Activated CD8-positive, alpha-beta T cell treated with anti-CD3 and anti-CD28 coated beads for 36 hours (primary cell): ENCODE measurements at regions of chr1 and their contacts with region 1.

Region 1: DNA sequence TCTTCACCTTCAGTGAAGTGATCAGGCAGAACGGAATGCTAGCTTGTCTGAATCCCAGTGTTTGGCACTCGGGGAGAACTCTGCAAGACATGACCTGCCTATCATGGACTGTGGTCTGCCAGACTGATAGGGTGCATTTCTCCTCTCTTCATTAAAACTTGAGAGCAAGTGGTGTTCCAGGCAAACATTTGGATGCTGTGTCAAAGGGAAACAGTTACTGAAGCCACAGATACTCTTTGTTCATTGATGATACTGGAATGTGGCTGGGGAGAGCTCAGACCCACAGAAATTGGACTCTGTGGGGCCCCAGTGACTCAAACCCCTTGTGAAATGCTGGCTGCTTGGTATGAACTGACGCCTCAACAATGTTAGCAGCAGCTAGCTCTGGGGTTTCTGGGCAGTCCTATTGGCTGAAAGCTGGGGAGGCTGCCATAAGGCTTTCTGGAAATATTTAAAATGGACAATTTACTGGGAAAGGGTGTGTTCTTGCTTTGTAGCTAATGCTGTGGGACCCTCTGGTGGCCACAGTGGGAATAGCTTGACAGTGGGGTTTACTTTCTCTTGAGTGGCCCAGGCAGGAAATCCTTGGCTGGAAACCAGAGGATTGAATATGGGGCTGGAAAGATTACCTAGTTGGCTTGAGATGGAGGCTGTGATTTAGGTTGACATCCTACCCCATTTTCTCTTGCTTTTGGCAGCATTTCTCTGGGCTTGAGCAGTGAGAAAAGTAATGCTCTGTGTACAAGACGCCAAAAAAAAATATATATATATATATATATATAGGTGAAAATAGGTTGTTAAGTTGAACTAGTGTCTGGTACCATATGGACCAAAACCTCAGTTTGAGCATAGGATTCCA is 8.0 kb upstream of the S100A10 start:
- DNase-seq: peak; percentile 88
- ATAC-seq: peak; percentile 86
- H3K4me3 Mint-ChIP-seq: no peak overlapping the region
- H3K27ac Mint-ChIP-seq: no peak overlapping the region
- H3K4me1 Mint-ChIP-seq: peaks cover 4% of the 10 kb centered on the region
- H3K27me3 Mint-ChIP-seq: peaks cover 11% of the 10 kb centered on the region
- CTCF ChIP-seq: peak; percentile 92

Region 2: DNA sequence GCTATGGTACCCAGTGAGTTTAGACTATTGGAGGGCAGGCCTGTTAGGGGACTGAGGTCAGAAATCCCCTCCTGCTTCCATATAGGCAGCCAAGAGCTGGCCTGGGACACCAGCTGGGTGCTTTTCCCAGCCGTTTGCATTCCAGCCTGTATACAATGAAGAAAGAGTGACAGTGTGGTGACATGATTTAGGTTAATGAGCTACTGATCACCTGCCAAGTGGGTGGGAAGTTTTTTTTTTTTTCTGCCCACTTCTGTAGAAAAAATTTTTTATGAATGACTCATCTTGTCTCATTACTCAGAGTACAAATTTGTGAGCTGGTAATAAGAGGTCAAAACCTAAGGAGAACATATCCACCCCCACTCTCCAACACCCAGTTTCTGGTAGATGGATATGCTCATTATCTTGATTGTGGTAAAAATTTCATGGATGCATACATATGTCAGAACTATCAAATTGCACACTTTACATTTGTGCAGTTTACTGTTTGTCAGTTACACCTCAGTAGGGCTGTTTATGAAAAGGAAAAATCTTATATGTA is 506.8 kb before region 1 on chr1:
- CTCF ChIA-PET with region 1: no interaction called
- POLR2A ChIA-PET with region 1: no interaction called
- intact Hi-C with region 1: no loop called
- DNase-seq: no peak
- ATAC-seq: peak; percentile 87
- H3K4me3 Mint-ChIP-seq: no peak overlapping the region
- H3K27ac Mint-ChIP-seq: no peak overlapping the region
- H3K4me1 Mint-ChIP-seq: peaks cover 5% of the 10 kb centered on the region
- H3K27me3 Mint-ChIP-seq: no peaks in the 10 kb centered on the region
- CTCF ChIP-seq: no peak

Region 3: GRCh38 chr1:151888972-151889570 is 112.5 kb before region 1 on chr1:
- CTCF ChIA-PET with region 1: interaction called, 26 read pairs
- POLR2A ChIA-PET with region 1: no interaction called
- intact Hi-C with region 1: no loop called
- DNase-seq: no peak
- ATAC-seq: peak; percentile 58
- H3K4me3 Mint-ChIP-seq: no peak overlapping the region
- H3K27ac Mint-ChIP-seq: no peak overlapping the region
- H3K4me1 Mint-ChIP-seq: peaks cover 18% of the 10 kb centered on the region
- H3K27me3 Mint-ChIP-seq: no peaks in the 10 kb centered on the region
- CTCF ChIP-seq: peak; percentile 60

Region 4: DNA sequence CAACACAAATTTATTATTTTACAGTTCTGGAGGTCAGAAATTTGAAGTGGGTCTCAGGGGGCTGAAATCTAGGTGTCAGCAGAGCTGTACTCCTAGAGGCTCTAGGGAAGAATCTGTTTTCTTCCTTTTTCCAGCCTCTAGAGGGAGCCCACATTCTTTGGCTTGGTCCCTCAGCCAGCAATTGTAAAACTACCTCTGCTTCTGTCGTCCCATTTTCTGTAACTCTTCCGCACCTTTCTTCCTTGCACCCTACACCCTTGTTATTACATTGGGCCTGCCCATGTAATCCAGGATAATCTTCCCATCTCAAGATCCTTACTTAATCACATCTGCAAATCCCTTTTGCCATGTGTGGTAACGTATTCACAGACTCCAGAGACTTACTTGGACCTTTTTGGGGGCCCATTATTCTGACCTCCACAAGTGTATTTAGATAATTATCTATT is 67.5 kb before region 1 on chr1:
- CTCF ChIA-PET with region 1: interaction called, 287 read pairs
- POLR2A ChIA-PET with region 1: interaction called, 3 read pairs
- intact Hi-C with region 1: loop called (anchors 5 kb)
- DNase-seq: peak; percentile 48
- ATAC-seq: peak; percentile 87
- H3K4me3 Mint-ChIP-seq: no peak overlapping the region
- H3K27ac Mint-ChIP-seq: no peak overlapping the region
- H3K4me1 Mint-ChIP-seq: peaks cover 2% of the 10 kb centered on the region
- H3K27me3 Mint-ChIP-seq: peaks cover 1% of the 10 kb centered on the region
- CTCF ChIP-seq: peak; percentile 90

Region 5: DNA sequence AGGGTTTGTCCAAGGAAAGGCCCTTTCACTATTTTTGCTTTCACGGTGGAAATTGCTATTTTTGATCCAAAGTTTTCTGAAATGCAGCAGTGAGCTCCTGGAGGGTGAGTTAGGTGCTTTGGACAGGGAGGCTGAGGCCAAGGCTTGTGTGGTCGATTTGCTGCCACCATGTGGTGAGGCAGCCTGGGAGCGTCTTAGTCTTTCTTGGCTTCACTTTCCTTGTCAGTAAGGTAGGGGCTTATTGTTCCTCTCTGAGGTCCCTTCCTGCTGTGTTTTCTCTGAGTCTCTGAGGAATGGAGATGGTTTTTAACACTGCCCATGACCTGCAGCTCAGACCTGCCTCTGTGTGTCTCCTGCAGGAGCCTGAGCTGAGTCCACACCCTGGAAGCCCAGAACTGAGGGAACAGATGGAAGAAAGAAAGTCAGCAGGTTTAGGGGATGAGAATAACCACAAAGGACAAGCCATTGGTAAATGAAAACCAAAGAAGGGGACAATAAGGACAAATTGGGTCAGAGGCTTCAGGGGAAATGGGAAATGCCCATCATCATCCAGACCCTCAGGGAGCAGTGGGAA is 12.1 kb after region 1 on chr1:
- CTCF ChIA-PET with region 1: interaction called, 122 read pairs
- POLR2A ChIA-PET with region 1: no interaction called
- intact Hi-C with region 1: no loop called
- DNase-seq: peak; percentile 66
- ATAC-seq: peak; percentile 60
- H3K4me3 Mint-ChIP-seq: no peak overlapping the region
- H3K27ac Mint-ChIP-seq: no peak overlapping the region
- H3K4me1 Mint-ChIP-seq: peaks cover 3% of the 10 kb centered on the region
- H3K27me3 Mint-ChIP-seq: peaks cover 12% of the 10 kb centered on the region
- CTCF ChIP-seq: peak; percentile 60

Region 6: DNA sequence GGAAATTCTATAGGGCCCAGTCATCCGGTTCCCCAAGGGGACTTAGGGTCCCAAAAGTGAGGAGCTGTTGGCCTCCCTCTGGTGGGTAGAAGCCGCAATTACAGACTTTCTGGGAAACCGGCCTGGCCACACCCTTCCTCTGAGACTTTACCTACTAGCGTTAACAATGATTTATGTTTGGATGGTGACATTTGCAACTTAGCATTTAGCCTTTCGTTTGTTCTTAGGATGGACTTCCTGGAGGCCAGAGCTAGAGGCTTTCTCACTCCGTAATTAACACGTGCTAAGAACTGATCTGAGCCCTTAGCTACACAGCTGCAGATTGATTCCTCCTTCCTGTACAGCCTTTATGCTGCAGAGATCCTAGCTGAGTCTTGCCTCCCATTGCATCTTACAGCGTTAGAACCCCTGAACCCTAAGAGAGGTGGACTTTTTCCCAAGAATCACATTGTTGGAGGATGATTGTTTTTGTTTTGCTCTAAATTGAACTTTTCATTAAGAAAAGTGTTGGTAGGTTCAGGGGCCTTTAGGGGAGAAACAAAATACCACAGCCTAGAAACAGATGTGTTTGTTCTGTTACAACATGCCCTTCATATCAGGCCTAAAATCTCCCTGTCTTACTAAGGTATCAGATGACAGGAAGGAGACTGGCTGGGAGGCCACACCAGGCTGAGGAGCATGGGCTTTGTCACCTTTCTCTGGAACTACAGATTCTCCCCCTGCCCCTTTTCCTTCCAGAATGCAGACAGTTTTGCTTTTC is 33.2 kb after region 1 on chr1:
- CTCF ChIA-PET with region 1: interaction called, 14 read pairs
- POLR2A ChIA-PET with region 1: interaction called, 3 read pairs
- intact Hi-C with region 1: loop called (anchors 2 kb)
- DNase-seq: peak; percentile 84
- ATAC-seq: peak; percentile 78
- H3K4me3 Mint-ChIP-seq: peak overlapping the region; percentile 92
- H3K27ac Mint-ChIP-seq: peak overlapping the region; percentile 93
- H3K4me1 Mint-ChIP-seq: peaks cover 34% of the 10 kb centered on the region
- H3K27me3 Mint-ChIP-seq: no peaks in the 10 kb centered on the region
- CTCF ChIP-seq: peak; percentile 83

Region 7: DNA sequence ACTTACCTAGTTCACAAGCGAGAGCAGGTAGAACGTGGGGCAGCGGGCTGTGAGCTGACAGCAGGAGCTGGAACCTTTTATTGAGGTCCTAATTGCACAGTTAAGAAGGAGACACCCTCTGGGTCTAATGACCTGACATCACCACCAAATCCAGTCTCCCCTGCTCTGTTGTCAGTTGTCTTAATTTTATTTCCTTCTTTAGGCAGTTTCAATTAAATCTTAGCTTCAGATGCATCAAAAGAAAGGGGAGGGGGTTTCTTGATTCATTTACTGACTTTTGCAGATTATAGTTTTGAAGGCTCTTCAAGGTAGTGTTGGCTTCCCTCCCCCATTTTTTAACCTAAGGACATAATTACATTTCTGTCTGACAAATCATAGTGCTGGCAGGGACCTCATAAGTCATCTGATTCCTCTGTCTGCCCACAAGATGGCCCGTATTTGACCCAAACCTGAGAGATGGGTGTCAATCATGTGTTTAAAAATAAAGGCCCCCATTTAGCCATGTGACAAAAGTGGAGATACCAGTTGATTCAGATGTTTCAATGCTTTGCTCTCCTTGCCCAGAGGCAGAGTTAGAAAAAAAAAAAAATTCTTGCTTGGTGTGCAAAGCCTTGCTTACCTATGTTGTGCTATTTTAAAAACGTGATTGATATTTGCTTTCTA is 87.5 kb after region 1 on chr1 and contains the start of gene TCHHL1:
- CTCF ChIA-PET with region 1: no interaction called
- POLR2A ChIA-PET with region 1: no interaction called
- intact Hi-C with region 1: no loop called
- DNase-seq: no peak
- ATAC-seq: no peak
- H3K4me3 Mint-ChIP-seq: no peak within 1 kb of the TSS
- H3K27ac Mint-ChIP-seq: no peak within 1 kb of the TSS
- H3K4me1 Mint-ChIP-seq: no peaks in the 10 kb centered on the region
- H3K27me3 Mint-ChIP-seq: peaks cover 18% of the 10 kb centered on the region
- CTCF ChIP-seq: no peak
- total RNA-seq, gene TCHHL1: not detected